A549 (cell line): ENCODE measurements at regions of chr20 and their contacts with region 1.

Region 1: DNA sequence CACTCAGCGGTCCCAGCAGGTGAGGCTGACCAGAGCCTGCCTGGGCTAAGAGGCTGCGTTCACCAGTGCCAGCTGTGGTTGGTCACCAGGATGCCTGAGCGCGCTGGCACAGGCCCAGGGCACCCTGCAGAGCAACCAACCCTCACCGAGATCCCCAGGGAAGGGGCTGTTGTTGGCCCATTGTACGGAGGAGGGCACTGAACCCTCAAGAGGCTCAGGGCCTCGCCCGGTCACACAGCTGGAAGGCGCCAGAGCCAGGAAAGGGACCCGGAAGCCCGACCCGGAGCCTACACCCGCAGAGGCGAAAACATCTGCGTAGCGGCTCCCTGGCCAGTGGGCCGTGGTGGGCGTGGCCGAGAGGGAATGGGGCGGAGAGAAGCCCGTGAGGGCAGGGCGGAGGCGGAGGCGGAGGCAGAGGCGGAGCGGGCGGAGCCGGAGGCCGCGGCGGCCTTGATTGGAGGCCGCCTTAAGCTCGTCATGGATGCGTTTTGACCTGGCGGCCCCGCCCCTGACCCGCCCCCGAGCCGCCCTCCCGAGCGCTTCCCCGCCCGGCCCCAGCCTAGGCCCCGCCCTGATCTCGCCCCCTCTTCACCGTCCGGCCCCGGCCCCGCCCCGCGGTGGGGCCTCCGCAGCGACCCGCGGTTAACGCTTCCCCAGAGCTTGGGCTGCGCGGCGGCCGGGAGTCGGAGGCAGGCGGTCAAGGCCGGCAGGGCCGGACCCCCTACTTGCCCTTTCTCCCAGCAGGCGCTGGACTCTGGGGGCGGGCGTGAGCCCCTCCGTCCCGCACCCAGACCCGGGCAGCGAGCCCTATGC is 2.2 kb upstream of the MRGBP start:
- DNase-seq: peak; percentile 93 to 97
- ATAC-seq: peak; percentile 65 to 83
- H3K4me3 ChIP-seq: peak overlapping the region; percentile 64
- H3K27ac ChIP-seq: peak overlapping the region; percentile 92 to 100
- H3K4me1 ChIP-seq: peaks cover 29% of the 10 kb centered on the region
- CTCF ChIP-seq: no peak
- EP300 ChIP-seq: no peak
- POLR2A ChIP-seq: peak; percentile 67
- RAD21 ChIP-seq: no peak

Region 2: GRCh38 chr20:62516345-62516744 is 277.8 kb before region 1 on chr20:
- CTCF ChIA-PET with region 1: interaction called, 10 read pairs
- POLR2A ChIA-PET with region 1: no interaction called
- DNase-seq: peak; percentile 64 to 76
- ATAC-seq: peak; percentile 86 to 93
- H3K4me3 ChIP-seq: no peak overlapping the region
- H3K27ac ChIP-seq: no peak overlapping the region
- H3K4me1 ChIP-seq: no peaks in the 10 kb centered on the region
- CTCF ChIP-seq: peak; percentile 55
- EP300 ChIP-seq: no peak
- POLR2A ChIP-seq: no peak
- RAD21 ChIP-seq: peak; percentile 55 to 60

Region 3: GRCh38 chr20:62659488-62660239 is 134.5 kb before region 1 on chr20:
- CTCF ChIA-PET with region 1: interaction called, 311 read pairs
- POLR2A ChIA-PET with region 1: interaction called, 3 read pairs
- DNase-seq: no peak
- ATAC-seq: no peak
- H3K4me3 ChIP-seq: no peak overlapping the region
- H3K27ac ChIP-seq: no peak overlapping the region
- H3K4me1 ChIP-seq: 0 out of 3 replicates have a peak, but pooled peaks cover 5% of the 10 kb centered on the region
- CTCF ChIP-seq: no peak
- EP300 ChIP-seq: no peak
- POLR2A ChIP-seq: no peak
- RAD21 ChIP-seq: no peak

Region 4: DNA sequence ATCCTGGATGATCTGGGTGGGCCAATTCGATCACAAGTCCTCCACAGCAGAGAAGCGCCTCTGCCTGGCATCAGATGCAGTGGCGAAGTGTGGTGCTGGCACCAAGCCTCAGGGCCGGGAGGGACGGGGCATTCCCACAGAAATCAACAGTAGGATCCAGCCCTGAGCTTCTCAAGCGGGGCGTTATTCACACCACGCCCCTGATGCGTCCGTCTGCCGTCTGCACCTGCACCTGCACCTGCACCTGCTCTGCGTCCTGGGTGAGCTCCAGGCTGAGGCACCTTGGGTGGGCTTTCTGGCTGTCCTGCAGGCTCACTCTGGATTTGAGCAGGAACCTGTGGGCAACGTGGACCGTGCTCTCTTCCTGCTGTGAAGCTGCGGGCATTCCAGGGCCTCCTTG is 99.2 kb before region 1 on chr20:
- CTCF ChIA-PET with region 1: interaction called, 250 read pairs
- POLR2A ChIA-PET with region 1: no interaction called
- DNase-seq: no peak
- ATAC-seq: no peak
- H3K4me3 ChIP-seq: no peak overlapping the region
- H3K27ac ChIP-seq: no peak overlapping the region
- H3K4me1 ChIP-seq: no peaks in the 10 kb centered on the region
- CTCF ChIP-seq: no peak
- EP300 ChIP-seq: no peak
- POLR2A ChIP-seq: no peak
- RAD21 ChIP-seq: no peak

Region 5: GRCh38 chr20:62734881-62735821 is 59.0 kb before region 1 on chr20:
- CTCF ChIA-PET with region 1: interaction called, 27 read pairs
- POLR2A ChIA-PET with region 1: no interaction called
- DNase-seq: no peak
- ATAC-seq: no peak
- H3K4me3 ChIP-seq: no peak overlapping the region
- H3K27ac ChIP-seq: no peak overlapping the region
- H3K4me1 ChIP-seq: peaks cover 9% of the 10 kb centered on the region
- CTCF ChIP-seq: no peak
- EP300 ChIP-seq: no peak
- POLR2A ChIP-seq: no peak
- RAD21 ChIP-seq: no peak

Region 6: DNA sequence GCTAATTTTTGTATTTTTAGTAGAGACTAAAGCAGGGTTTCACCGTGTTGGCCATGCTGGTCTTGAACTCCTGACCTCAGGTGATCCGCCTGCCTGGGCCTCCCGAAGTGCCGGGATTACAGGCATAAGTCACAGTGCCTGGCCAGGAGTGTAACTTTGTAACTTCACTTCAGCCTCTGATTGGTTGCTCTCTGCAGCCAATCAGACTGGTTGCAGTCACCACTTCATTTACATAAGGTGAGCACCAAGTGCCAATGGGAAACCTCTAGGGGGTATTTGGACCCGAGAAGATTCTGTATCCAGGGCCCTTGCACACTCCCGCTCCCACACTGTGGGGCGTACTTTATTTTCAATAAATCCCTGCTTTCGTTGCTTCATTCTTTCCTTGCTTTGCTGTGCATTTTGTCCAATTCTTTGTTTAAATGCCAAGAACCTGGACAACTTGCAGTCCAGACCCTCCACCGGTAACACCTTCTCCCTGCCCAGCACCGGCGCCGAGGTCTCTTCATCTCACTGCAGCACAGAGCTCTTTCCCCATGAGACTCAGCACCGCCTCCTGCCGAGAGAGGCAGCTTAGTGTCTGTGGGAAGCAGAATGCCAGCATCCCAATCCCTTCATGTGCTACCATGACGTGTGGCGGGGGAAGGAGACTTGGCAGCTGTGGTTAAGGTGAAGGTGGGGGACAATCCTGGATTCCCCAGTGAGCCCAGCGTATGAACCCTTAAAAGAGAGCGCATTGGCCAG is 11.8 kb before region 1 on chr20:
- CTCF ChIA-PET with region 1: interaction called, 28 read pairs
- POLR2A ChIA-PET with region 1: no interaction called
- DNase-seq: no peak
- ATAC-seq: peak in 1 of 2 experiments; percentile 44; a peak in 2 of 6 replicates
- H3K4me3 ChIP-seq: no peak overlapping the region
- H3K27ac ChIP-seq: no peak overlapping the region
- H3K4me1 ChIP-seq: no peaks in the 10 kb centered on the region
- CTCF ChIP-seq: no peak
- EP300 ChIP-seq: no peak
- POLR2A ChIP-seq: no peak
- RAD21 ChIP-seq: no peak

Region 7: DNA sequence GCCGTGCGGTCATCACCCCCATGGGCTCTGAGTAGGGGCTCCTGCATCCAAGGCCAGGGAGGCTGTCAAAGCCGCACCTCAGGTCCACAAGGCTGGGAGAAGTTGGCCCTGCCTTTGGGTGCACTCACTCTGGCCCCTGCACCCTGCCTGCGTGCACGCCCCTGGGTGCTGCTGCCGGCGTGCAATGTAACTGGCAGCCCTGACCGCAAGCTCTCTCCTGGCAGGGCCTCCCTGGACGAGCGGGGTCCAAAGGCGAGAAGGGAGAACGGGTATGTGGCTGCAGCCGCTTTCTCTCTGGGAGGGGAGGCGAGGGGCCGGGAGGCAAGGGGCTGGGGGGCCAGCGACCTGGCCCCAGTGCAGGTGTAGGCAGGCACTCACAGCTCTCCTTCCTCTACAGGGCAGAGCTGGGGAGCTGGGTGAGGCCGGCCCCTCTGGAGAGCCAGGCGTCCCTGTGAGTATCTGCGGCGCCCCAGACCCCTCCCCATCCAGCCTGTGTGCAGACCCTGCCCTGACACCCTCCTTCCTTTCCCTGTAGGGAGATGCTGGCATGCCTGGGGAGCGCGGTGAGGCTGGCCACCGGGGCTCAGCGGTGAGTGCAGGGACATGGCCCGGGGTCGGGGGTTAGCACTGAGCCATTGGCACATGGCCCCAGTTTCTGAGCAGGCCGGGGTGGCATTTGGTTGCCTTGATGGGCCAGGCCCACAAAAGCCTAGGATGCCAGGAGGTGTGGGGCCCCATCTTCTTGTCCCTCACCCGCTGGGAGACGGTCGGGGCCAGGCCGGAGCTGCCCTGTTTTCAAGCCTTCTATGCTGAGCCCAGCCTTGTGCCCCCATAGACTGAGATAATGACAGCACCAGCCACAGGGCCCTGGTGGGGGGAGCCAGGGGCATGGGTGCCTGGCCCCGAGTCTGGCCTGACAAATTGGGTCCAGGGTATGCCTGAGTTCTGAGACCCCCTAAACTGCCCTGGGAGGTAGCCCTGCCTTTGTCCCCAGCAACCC is 35.4 kb after region 1 on chr20:
- CTCF ChIA-PET with region 1: no interaction called
- POLR2A ChIA-PET with region 1: no interaction called
- DNase-seq: no peak
- ATAC-seq: no peak
- H3K4me3 ChIP-seq: no peak overlapping the region
- H3K27ac ChIP-seq: peak overlapping the region in 1 of 2 experiments; percentile 61; a peak in 2 of 6 replicates
- H3K4me1 ChIP-seq: peaks cover 19% of the 10 kb centered on the region
- CTCF ChIP-seq: no peak
- EP300 ChIP-seq: no peak
- POLR2A ChIP-seq: no peak
- RAD21 ChIP-seq: no peak

Region 8: DNA sequence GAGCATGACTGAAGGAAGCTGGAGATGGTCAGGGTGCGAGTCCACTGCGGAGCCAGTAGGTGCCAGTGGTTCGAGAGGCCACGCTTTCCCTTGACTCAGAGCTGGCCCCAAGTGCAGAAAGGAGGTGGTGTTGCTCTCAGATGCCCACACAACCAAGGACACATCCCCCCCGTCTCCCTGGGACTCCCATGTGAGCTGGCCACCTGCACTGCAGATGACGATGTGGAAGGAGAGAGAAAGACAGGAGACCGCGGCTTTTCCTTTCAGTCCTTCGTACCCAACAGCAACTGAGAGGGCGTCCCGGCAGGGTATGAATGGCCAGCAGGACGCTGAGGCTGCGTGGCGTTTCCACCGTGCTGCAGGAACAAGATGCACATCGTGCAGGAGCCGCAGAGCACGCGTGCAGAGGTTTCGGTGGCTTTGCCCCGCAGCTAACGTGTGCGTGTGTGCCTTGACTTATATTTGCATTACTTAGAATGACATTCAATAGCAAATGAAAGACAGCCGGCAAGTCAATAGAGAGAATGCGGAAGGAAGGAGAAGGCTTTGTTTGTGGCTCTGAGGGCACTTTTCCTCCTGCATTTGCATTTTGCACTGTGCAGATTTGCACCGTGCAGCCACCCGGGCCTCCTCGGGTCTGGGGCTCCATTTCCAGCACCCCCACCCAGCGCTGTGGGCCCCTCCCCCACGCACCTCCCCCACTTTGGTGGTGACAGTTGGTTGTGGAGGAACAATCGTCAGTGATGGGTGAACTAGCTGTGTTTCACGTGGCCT is 238.9 kb after region 1 on chr20:
- CTCF ChIA-PET with region 1: no interaction called
- POLR2A ChIA-PET with region 1: no interaction called
- DNase-seq: no peak
- ATAC-seq: peak; percentile 23 to 44; a peak in 4 of 6 replicates
- H3K4me3 ChIP-seq: no peak overlapping the region
- H3K27ac ChIP-seq: no peak overlapping the region
- H3K4me1 ChIP-seq: 0 out of 3 replicates have a peak, but pooled peaks cover 2% of the 10 kb centered on the region
- CTCF ChIP-seq: no peak
- EP300 ChIP-seq: no peak
- POLR2A ChIP-seq: no peak
- RAD21 ChIP-seq: no peak